ENCODE measurements at regions of chr3 and their contacts with region 1.

Region 1: DNA sequence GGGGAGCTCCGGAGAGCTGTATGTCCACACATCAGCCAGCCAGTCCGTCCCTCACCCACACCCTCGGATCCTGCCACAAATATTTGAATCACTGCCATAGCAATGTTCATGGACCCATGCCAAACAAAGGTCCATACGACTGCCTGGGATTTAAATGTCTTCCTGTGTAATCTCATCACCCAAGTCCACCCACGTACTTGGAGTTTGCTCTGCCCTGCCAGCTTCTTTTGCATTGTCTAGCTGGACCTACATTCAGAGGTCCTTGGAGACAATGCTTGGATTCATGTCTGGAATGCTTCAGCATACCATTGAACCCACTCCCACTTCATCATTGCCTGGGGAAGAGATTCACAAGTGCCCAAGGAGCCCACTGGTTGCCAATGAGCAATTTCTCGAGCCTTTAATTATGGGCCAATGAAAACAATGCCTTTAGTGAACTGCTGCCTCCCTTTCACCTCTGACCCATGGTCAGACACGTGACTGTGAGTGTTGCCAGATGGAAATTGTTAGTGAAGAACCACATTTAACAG is 90.4 kb upstream of the PHLDB2 start:
- DNase-seq: no peak
- H3K4me3 ChIP-seq: no peak overlapping the region
- H3K27ac ChIP-seq: peak overlapping the region; percentile 43 to 68 (median 66)
- H3K4me1 ChIP-seq: peaks cover 0 to 46% (median 37%) of the 10 kb centered on the region in 4 donors
- H3K27me3 ChIP-seq: no peaks in the 10 kb centered on the region
- CTCF ChIP-seq: no peak
- EP300 ChIP-seq: no peak
- POLR2A ChIP-seq: no peak

Region 2: DNA sequence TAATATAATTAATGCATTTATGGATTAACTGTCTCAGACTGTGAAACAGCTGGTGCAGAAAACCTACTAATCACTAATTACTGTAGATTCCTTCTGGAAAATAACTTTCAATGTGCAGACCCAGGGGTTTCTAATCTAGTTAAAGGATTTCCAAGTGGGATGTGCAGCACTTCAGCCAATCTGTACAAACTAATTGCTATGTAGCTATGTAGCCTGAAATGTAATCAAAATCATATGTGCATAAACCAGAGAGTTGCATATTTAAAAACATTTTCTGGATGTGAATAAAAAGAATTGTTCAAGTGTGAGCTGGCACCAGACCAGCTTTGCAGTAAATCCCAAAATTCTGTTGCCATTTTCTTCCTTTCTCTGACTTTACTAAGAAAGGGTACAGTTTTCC is 354.1 kb before region 1 on chr3:
- intact Hi-C with region 1: no loop called
- DNase-seq: no peak
- H3K4me3 ChIP-seq: no peak overlapping the region
- H3K27ac ChIP-seq: no peak overlapping the region
- H3K4me1 ChIP-seq: no peaks in the 10 kb centered on the region
- H3K27me3 ChIP-seq: no peaks in the 10 kb centered on the region
- CTCF ChIP-seq: no peak
- EP300 ChIP-seq: no peak
- POLR2A ChIP-seq: no peak

Region 3: GRCh38 chr3:111803123-111803593 is 34.5 kb after region 1 on chr3:
- intact Hi-C with region 1: loop called (anchors 5 kb)
- DNase-seq: peak; percentile 90
- H3K4me3 ChIP-seq: no peak overlapping the region
- H3K27ac ChIP-seq: peak overlapping the region; percentile 74 to 82 (median 79)
- H3K4me1 ChIP-seq: peaks cover 0 to 38% (median 36%) of the 10 kb centered on the region in 4 donors
- H3K27me3 ChIP-seq: no peaks in the 10 kb centered on the region
- CTCF ChIP-seq: no peak
- EP300 ChIP-seq: peak in 2 of 4 donors; percentile 10 to 39
- POLR2A ChIP-seq: no peak

Region 4: GRCh38 chr3:111910806-111911205 is 142.2 kb after region 1 on chr3:
- intact Hi-C with region 1: no loop called
- DNase-seq: no peak
- H3K4me3 ChIP-seq: no peak overlapping the region
- H3K27ac ChIP-seq: peak overlapping the region; percentile 38 to 72 (median 60)
- H3K4me1 ChIP-seq: peaks cover 0 to 83% (median 51%) of the 10 kb centered on the region in 4 donors
- H3K27me3 ChIP-seq: no peaks in the 10 kb centered on the region
- CTCF ChIP-seq: no peak
- EP300 ChIP-seq: no peak
- POLR2A ChIP-seq: no peak